ENCODE measurements at regions of chr7 and their contacts with region 1.

Region 1: DNA sequence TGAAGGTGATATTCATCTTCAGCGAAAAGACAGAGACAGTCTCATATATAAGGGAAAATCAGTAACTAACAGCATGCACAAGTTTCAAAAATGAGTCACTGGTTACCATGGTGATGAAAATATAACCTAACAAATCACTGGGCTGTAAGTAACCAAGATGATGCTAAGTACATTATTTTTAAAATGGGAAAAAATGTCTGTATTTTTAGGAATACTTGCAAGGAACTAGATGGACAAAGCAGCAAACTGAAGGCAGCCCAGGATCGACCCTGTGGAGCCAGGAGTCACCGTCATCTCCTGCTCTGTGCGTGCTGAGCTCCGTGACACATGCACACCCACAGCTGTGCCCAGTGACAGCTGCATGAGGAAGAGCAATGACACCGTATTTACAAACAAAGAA is 137.3 kb downstream of the ELMO1 start:
- DNase-seq: peak; percentile 47 to 66 (median 61)
- H3K4me3 ChIP-seq: no peak overlapping the region
- H3K4me3 Mint-ChIP-seq: peak overlapping the region in 7 of 8 donors; percentile 44 to 87 (median 75)
- H3K27ac ChIP-seq: peak overlapping the region; percentile 54
- H3K27ac Mint-ChIP-seq: peak overlapping the region; percentile 95 to 99 (median 98)
- H3K4me1 ChIP-seq: peaks cover 53% of the 10 kb centered on the region
- H3K4me1 Mint-ChIP-seq: peaks cover 57 to 89% (median 71%) of the 10 kb centered on the region in 4 donors
- H3K27me3 ChIP-seq: no peaks in the 10 kb centered on the region
- H3K27me3 Mint-ChIP-seq: no peaks in the 10 kb centered on the region

Region 2: DNA sequence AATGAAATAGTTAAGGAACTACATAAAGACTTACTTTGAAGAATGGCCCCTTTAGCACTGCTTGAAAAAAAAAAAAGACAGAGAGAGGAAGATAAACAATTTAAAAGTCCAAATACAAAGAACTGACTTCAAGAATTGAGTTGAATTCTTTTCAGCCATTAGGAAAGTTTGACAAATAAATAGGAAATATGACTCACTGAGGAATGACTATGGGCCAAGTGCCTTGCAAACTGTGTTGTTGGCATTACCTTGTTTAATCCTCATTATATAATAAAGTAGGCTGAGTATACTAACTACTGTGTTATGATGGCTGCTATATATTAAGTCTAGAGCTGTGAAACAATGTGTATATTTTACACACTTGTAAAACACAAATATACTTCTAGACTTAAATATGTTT is 13.8 kb before region 1 on chr7:
- CTCF ChIA-PET with region 1: no interaction called
- POLR2A ChIA-PET with region 1: interaction called, 4 read pairs
- intact Hi-C with region 1: loop called (anchors 2 kb)
- DNase-seq: no peak
- H3K4me3 ChIP-seq: no peak overlapping the region
- H3K4me3 Mint-ChIP-seq: no peak overlapping the region
- H3K27ac ChIP-seq: no peak overlapping the region
- H3K27ac Mint-ChIP-seq: peak overlapping the region in 3 of 7 donors; percentile 35 to 73 (median 69)
- H3K4me1 ChIP-seq: no peaks in the 10 kb centered on the region
- H3K4me1 Mint-ChIP-seq: peaks cover 1 to 19% (median 13%) of the 10 kb centered on the region in 4 donors
- H3K27me3 ChIP-seq: no peaks in the 10 kb centered on the region
- H3K27me3 Mint-ChIP-seq: no peaks in the 10 kb centered on the region

Measured in CD4-positive, alpha-beta memory T cell (primary cell).